A673 (cell line): ENCODE measurements at regions of chr5 and their contacts with region 1.

Region 1: GRCh38 chr5:144032375-144032774 is 138.1 kb downstream of the YIPF5 start:
- DNase-seq: peak; percentile 16
- H3K4me3 ChIP-seq: no peak overlapping the region
- H3K27ac ChIP-seq: no peak overlapping the region
- H3K4me1 ChIP-seq: peaks cover 7% of the 10 kb centered on the region
- H3K27me3 ChIP-seq: no peaks in the 10 kb centered on the region
- CTCF ChIP-seq: no peak

Region 2: DNA sequence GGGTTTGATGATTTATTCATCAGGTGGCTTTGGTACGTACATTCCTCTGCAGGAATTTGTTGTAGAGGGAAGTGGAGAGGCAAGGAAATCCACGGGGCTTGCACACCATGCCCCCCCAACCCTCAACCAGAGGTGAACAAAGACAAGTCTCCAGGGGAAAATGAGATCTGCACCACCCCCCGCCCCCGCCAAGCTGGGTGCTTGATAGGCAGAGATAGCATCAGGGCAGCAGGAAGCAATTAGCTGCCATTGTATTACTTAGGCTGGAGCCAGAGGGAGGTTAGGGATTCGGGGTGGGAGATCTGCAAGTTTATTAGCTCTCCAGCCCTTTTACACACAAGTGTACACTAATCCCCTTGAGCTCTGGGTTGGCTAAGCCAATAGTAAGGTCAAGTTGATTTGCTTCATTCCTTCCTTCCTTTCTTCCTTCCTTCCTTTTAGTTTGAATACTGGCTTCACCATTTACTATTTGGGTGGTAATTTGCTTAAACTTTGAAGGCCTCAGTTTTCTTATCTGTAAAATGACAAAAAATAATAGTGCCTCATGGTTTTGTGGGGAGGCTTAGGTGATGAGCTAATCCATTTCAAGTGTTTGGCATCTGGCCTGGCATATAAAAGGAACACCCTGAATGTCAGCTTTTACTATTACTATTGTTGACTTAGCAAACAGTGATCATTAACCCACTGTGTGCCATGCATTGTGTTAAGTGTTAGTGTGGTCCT is 1741.6 kb before region 1 on chr5:
- CTCF ChIA-PET with region 1: no interaction called
- POLR2A ChIA-PET with region 1: no interaction called
- intact Hi-C with region 1: no loop called
- DNase-seq: peak; percentile 98
- H3K4me3 ChIP-seq: no peak overlapping the region
- H3K27ac ChIP-seq: no peak overlapping the region
- H3K4me1 ChIP-seq: peaks cover 35% of the 10 kb centered on the region
- H3K27me3 ChIP-seq: no peaks in the 10 kb centered on the region
- CTCF ChIP-seq: no peak

Region 3: GRCh38 chr5:144048259-144048856 is 16.0 kb after region 1 on chr5:
- CTCF ChIA-PET with region 1: no interaction called
- POLR2A ChIA-PET with region 1: no interaction called
- intact Hi-C with region 1: loop called (anchors 1 kb)
- DNase-seq: no peak
- H3K4me3 ChIP-seq: no peak overlapping the region
- H3K27ac ChIP-seq: no peak overlapping the region
- H3K4me1 ChIP-seq: no peaks in the 10 kb centered on the region
- H3K27me3 ChIP-seq: no peaks in the 10 kb centered on the region
- CTCF ChIP-seq: no peak